H1 (cell line): ENCODE measurements at regions of chr6 and their contacts with region 1.

Region 1: GRCh38 chr6:36912586-36912985 is 26.8 kb downstream of the C6orf89 start:
- DNase-seq: no peak
- H3K4me3 ChIP-seq: no peak overlapping the region
- H3K27ac ChIP-seq: no peak overlapping the region
- H3K4me1 ChIP-seq: no peaks in the 10 kb centered on the region; a peak in 1 of 7 replicates
- H3K27me3 ChIP-seq: no peaks in the 10 kb centered on the region
- CTCF ChIP-seq: no peak
- EP300 ChIP-seq: no peak
- POLR2A ChIP-seq: no peak
- RAD21 ChIP-seq: no peak

Region 2: DNA sequence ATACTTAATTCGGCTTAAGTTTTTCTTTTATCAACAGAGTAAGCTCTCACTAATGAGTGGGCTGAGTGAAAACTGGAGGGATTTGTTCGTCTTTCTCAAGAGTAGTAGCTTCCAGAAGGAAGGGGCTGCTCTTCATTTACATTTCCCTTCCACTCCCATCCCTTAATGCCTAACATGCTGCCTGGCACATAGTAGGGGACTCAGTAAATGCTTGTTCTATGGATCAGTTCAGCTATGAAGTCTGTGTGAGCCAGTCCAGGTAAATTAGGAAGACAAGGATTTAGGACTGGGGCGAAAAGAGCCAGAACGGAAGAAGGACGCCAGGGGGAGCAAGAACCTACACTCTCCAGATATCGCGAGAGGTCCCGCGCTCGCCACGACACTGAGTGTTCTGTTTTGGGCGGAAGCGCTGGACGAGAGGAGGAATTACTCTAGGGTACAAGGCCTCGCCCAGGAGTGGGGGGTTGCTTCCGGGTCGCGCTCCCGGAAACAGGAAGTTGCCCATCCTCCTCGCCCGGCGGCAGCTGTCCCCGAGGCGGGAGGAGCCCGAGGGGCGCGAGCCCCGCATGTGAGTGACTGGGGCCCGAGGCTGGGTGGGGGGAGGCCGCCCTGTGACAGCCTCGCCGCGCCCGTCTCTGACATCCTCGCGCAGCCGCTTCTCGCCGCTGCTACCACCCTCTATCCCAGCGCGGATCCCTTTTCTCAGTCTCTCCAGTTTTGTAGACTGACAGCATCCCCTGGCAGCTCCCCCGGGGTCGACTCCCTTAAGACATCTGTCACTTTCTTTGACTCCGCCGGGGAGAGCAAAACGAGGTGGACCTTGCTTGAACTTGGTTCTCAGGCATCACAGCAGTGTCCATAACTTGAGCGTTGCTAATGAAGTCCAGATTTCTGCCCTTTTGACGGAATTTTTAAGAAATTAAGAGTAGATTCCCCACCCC is 26.9 kb before region 1 on chr6 and contains the start of gene C6orf89:
- CTCF ChIA-PET with region 1: interaction called, 18 read pairs
- POLR2A ChIA-PET with region 1: interaction called, 4 read pairs
- DNase-seq: peak; percentile 95 to 97
- H3K4me3 ChIP-seq: peak within 1 kb of the TSS; percentile 47 to 81 (median 70)
- H3K27ac ChIP-seq: peak within 1 kb of the TSS; percentile 24; the same call in 1 of the 2 replicates
- H3K4me1 ChIP-seq: no peaks in the 10 kb centered on the region; a peak in 1 of 7 replicates
- H3K27me3 ChIP-seq: no peaks in the 10 kb centered on the region
- CTCF ChIP-seq: peak; percentile 72 to 87 (median 82)
- EP300 ChIP-seq: 0 out of 3 replicates have a peak, but pooled peaks of 1 of the 2 experiments have one; percentile 10
- POLR2A ChIP-seq: no peak
- RAD21 ChIP-seq: peak; percentile 32 to 47; a peak in 3 of 4 replicates
- total RNA-seq, gene C6orf89: 11.6 and 12.3 TPM in 2 replicates

Region 3: DNA sequence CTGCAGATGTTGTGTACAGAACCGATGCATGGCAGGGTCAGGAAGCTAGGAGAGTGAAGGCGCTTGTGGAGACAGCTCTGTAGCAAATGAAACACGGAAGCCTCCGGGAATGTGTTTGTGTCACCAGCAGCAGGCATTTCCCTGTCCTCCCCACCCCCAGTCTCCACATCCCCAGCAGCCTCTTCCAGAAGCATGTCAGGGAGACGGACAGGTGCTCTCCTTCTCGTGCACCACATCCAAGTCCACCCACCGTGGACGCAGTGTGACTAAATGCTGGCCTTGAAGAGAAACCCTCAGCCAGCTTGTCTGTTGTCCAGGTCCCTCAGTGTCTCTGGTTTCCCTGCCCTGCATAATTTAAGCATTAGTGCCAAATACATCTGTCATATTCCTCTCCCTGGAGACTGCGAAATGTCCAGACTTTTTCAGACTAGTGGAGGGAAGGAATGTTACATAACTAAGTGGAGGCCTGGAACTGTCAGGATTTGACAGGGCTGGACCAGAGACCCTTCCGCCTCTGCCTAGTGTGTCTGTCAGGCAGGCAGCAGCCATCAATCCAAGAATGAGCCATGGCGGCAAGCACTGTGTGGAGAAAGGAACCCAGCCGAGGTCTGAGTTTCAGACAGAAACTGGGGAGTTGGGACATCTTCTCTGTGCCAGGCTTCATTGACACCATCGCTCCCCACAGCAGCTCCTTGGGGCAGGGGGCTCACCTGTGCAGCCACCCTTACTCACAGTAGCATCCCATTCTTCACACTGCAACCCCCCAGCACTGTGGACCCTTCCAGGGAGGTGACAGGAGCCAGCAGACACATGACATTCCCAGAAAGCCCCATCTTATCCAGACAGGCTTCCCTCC is 15.3 kb after region 1 on chr6:
- CTCF ChIA-PET with region 1: interaction called, 11 read pairs
- POLR2A ChIA-PET with region 1: no interaction called
- DNase-seq: no peak
- H3K4me3 ChIP-seq: no peak overlapping the region
- H3K27ac ChIP-seq: no peak overlapping the region
- H3K4me1 ChIP-seq: no peaks in the 10 kb centered on the region
- H3K27me3 ChIP-seq: no peaks in the 10 kb centered on the region
- CTCF ChIP-seq: no peak
- EP300 ChIP-seq: no peak
- POLR2A ChIP-seq: no peak
- RAD21 ChIP-seq: no peak

Region 4: GRCh38 chr6:36936824-36937223 is 24.2 kb after region 1 on chr6:
- CTCF ChIA-PET with region 1: interaction called, 19 read pairs
- POLR2A ChIA-PET with region 1: no interaction called
- DNase-seq: no peak
- H3K4me3 ChIP-seq: no peak overlapping the region
- H3K27ac ChIP-seq: no peak overlapping the region
- H3K4me1 ChIP-seq: no peaks in the 10 kb centered on the region
- H3K27me3 ChIP-seq: no peaks in the 10 kb centered on the region
- CTCF ChIP-seq: no peak
- EP300 ChIP-seq: no peak
- POLR2A ChIP-seq: no peak
- RAD21 ChIP-seq: no peak

Region 5: DNA sequence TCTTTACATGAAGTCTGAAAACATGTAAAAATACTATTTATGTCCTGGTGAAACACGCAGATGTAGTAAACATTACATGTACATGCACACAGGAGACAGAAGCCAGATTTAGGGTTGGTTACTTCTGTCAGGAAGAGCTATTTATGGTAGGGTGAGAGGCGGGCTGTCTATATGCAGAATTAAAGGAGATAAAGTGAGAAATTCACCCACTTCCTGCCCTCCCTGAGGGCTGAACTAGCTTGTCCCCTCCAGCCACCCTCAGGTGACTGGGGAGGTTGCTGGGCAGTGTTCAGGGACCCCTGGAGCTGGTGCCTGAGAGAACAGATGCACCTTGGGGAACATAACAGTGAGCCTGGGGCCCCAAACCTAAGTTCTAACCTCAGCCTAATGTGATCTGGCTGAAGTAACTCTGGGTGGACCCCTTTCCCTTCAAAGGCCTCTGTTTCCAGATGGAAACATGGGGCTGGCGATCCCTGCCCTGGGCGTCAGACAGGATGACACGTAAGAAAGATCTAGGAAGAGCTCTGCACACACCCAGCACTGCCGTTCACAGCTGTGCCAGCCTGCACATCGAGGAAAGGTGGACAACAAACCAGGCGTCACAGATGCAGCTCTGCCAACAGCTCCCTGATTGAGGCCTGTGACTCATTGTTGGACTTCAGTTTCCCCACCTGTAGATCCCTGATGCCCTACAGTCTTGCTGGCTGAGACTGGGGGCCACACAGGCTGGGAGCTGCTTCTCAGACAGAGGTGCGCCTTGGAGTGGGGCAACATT is 43.3 kb after region 1 on chr6:
- CTCF ChIA-PET with region 1: interaction called, 27 read pairs
- POLR2A ChIA-PET with region 1: no interaction called
- DNase-seq: no peak
- H3K4me3 ChIP-seq: no peak overlapping the region
- H3K27ac ChIP-seq: no peak overlapping the region
- H3K4me1 ChIP-seq: no peaks in the 10 kb centered on the region; a peak in 1 of 7 replicates
- H3K27me3 ChIP-seq: no peaks in the 10 kb centered on the region
- CTCF ChIP-seq: no peak
- EP300 ChIP-seq: no peak
- POLR2A ChIP-seq: no peak
- RAD21 ChIP-seq: no peak

Region 6: GRCh38 chr6:37011656-37012378 is 99.2 kb after region 1 on chr6:
- CTCF ChIA-PET with region 1: interaction called, 27 read pairs
- POLR2A ChIA-PET with region 1: interaction called, 3 read pairs
- DNase-seq: no peak
- H3K4me3 ChIP-seq: no peak overlapping the region
- H3K27ac ChIP-seq: no peak overlapping the region
- H3K4me1 ChIP-seq: no peaks in the 10 kb centered on the region; a peak in 2 of 7 replicates
- H3K27me3 ChIP-seq: no peaks in the 10 kb centered on the region
- CTCF ChIP-seq: no peak
- EP300 ChIP-seq: no peak
- POLR2A ChIP-seq: no peak
- RAD21 ChIP-seq: no peak